ENCODE measurements at regions of chr7 and their contacts with region 1.

Region 1: GRCh38 chr7:6577365-6578113 is at the start of gene ZDHHC4:
- DNase-seq: peak; percentile 91 to 96 (median 94)
- ATAC-seq: peak; percentile 97 to 99 (median 98)
- H3K4me3 ChIP-seq: peak within 1 kb of the TSS; percentile 5 to 93 (median 72)
- H3K27ac ChIP-seq: peak within 1 kb of the TSS; percentile 87 to 98 (median 92)
- H3K4me1 ChIP-seq: peaks cover 0 to 16% (median 5%) of the 10 kb centered on the region in 12 donors
- H3K27me3 ChIP-seq: no peaks in the 10 kb centered on the region
- CTCF ChIP-seq: peak in 1 of 12 donors; percentile 18
- POLR2A ChIP-seq: peak; percentile 61 to 88
- total RNA-seq, gene ZDHHC4: 26.2 to 45.5 (median 37.8) TPM

Region 2: GRCh38 chr7:6516387-6516983 is 61.1 kb before region 1 on chr7:
- intact Hi-C with region 1: loop called in 1 of 10 experiments (anchors 10 kb)
- DNase-seq: peak; percentile 81 to 91 (median 86)
- ATAC-seq: peak; percentile 81 to 91 (median 84)
- H3K4me3 ChIP-seq: peak overlapping the region in 9 of 12 donors; percentile 16 to 47 (median 30)
- H3K27ac ChIP-seq: peak overlapping the region in 1 of 12 donors; percentile 47
- H3K4me1 ChIP-seq: peaks cover 0 to 6% (median 4%) of the 10 kb centered on the region in 12 donors
- H3K27me3 ChIP-seq: peaks cover 0 to 4% (median 0%) of the 10 kb centered on the region in 9 donors
- CTCF ChIP-seq: peak; percentile 73 to 95 (median 86)
- POLR2A ChIP-seq: no peak

Region 3: GRCh38 chr7:6545398-6546126 is 32.0 kb before region 1 on chr7:
- intact Hi-C with region 1: no loop called
- DNase-seq: no peak
- ATAC-seq: no peak
- H3K4me3 ChIP-seq: no peak overlapping the region
- H3K27ac ChIP-seq: no peak overlapping the region
- H3K4me1 ChIP-seq: no peaks in the 10 kb centered on the region
- H3K27me3 ChIP-seq: peaks cover 0 to 13% (median 0%) of the 10 kb centered on the region in 9 donors
- CTCF ChIP-seq: no peak
- POLR2A ChIP-seq: no peak

Region 4: GRCh38 chr7:6589829-6590644 is 12.5 kb after region 1 on chr7 and contains the start of gene INTS15:
- intact Hi-C with region 1: loop called in 1 of 10 experiments (anchors 1 kb)
- DNase-seq: peak; percentile 74 to 88 (median 84)
- ATAC-seq: peak; percentile 71 to 96 (median 94)
- H3K4me3 ChIP-seq: peak within 1 kb of the TSS; percentile 68 to 96 (median 92)
- H3K27ac ChIP-seq: peak within 1 kb of the TSS; percentile 65 to 95 (median 91)
- H3K4me1 ChIP-seq: peaks cover 0 to 25% (median 15%) of the 10 kb centered on the region in 12 donors
- H3K27me3 ChIP-seq: no peaks in the 10 kb centered on the region
- CTCF ChIP-seq: peak; percentile 38 to 99 (median 81)
- POLR2A ChIP-seq: peak in 1 of 2 donors; percentile 57
- total RNA-seq, gene INTS15: 11.7 to 22.7 (median 15.3) TPM

Region 5: GRCh38 chr7:6650521-6651011 is 73.0 kb after region 1 on chr7:
- intact Hi-C with region 1: no loop called
- DNase-seq: peak in 1 of 5 donors; percentile 31
- ATAC-seq: no peak
- H3K4me3 ChIP-seq: no peak overlapping the region
- H3K27ac ChIP-seq: no peak overlapping the region
- H3K4me1 ChIP-seq: peaks cover 0 to 8% (median 0%) of the 10 kb centered on the region in 12 donors
- H3K27me3 ChIP-seq: no peaks in the 10 kb centered on the region
- CTCF ChIP-seq: no peak
- POLR2A ChIP-seq: no peak

Region 6: GRCh38 chr7:6729492-6730342 is 152.2 kb after region 1 on chr7:
- intact Hi-C with region 1: loop called in 1 of 10 experiments (anchors 5 kb)
- DNase-seq: peak; percentile 94 to 98 (median 97)
- ATAC-seq: peak; percentile 100
- H3K4me3 ChIP-seq: peak overlapping the region; percentile 64 to 95 (median 84)
- H3K27ac ChIP-seq: peak overlapping the region; percentile 59 to 93 (median 88)
- H3K4me1 ChIP-seq: peaks cover 0 to 20% (median 9%) of the 10 kb centered on the region in 12 donors
- H3K27me3 ChIP-seq: no peaks in the 10 kb centered on the region
- CTCF ChIP-seq: peak in 1 of 12 donors; percentile 21
- POLR2A ChIP-seq: peak; percentile 0 to 44

Measured in heart left ventricle (tissue), 16 donors.